Natural killer cell (primary cell): ENCODE measurements at regions of chr14 and their contacts with region 1.

Region 1: DNA sequence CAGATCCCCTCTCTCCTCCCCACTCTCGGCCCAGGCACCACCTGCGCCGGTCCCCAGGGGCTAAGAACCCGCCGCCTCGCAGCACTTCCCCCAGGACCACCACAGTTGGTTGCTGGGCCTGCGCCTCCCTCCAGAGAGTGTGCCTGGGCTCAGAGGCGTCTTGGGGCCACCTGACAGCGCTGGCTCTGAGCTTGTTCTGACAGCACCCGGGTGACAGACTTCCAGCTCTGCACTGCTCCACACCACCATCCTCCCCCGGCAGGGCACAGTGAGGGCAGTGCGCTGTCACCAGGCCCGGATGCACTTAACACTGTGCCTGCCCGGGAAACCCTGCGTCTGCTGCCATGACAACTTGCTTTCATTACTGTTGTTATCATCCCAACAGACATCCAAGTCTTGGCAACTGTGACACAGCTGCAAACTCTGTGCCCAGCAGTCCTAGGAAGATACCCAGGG is 6.6 kb downstream of the BRF1 start:
- DNase-seq: peak; percentile 73 to 82
- ATAC-seq: peak; percentile 67 to 83 (median 72)
- H3K4me3 ChIP-seq: no peak overlapping the region
- H3K4me3 Mint-ChIP-seq: peak overlapping the region; percentile 66
- H3K27ac ChIP-seq: peak overlapping the region; percentile 75
- H3K27ac Mint-ChIP-seq: peak overlapping the region; percentile 92 to 96
- H3K4me1 ChIP-seq: peaks cover 58% of the 10 kb centered on the region
- H3K4me1 Mint-ChIP-seq: peaks cover 32 to 49% of the 10 kb centered on the region in 2 donors
- H3K27me3 ChIP-seq: no peaks in the 10 kb centered on the region
- H3K27me3 Mint-ChIP-seq: no peaks in the 10 kb centered on the region
- CTCF ChIP-seq: no peak

Region 2: DNA sequence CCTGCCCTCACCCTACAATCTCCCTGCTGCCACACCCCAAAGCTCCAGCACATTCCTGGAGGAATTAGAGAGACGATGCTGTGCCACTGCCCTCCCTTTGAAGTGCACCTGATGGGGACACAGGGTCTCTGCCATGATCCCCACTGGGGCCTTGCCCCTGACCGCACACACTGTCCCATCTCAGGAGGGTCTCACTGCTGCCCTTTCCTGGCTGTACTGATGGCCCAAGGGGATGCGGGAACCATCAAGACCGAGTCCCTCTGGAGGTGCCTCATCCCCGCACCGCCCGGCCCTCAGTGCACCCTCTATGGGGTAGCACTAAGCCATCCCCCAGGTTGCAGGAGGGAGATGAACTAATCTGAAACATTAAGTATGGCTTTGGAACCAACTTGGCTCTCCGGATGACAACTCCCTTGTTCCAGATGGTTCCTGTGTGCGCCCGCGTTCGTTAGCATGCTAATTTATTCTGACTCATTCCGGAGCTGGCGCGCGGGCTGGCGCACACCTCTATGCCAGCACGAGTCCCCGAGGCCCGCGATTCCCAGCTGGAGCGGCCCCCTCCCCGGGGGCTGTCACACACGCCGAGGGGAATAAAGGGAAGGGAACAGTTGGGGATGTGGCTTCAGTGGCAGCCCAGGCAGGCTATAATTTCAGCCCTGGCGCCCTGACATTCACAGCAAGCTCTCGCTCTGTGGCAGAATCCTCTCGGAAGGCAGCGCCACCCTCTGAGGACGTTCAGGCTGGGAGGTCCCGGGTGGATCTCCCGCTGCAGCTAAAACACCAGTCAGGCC is 748.8 kb before region 1 on chr14:
- intact Hi-C with region 1: no loop called
- DNase-seq: no peak
- ATAC-seq: peak in 1 of 3 donors; percentile 6
- H3K4me3 ChIP-seq: no peak overlapping the region
- H3K4me3 Mint-ChIP-seq: no peak overlapping the region
- H3K27ac ChIP-seq: no peak overlapping the region
- H3K27ac Mint-ChIP-seq: no peak overlapping the region
- H3K4me1 ChIP-seq: no peaks in the 10 kb centered on the region
- H3K4me1 Mint-ChIP-seq: no peaks in the 10 kb centered on the region
- H3K27me3 ChIP-seq: no peaks in the 10 kb centered on the region
- H3K27me3 Mint-ChIP-seq: peaks cover 23 to 27% of the 10 kb centered on the region in 2 donors
- CTCF ChIP-seq: no peak

Region 3: DNA sequence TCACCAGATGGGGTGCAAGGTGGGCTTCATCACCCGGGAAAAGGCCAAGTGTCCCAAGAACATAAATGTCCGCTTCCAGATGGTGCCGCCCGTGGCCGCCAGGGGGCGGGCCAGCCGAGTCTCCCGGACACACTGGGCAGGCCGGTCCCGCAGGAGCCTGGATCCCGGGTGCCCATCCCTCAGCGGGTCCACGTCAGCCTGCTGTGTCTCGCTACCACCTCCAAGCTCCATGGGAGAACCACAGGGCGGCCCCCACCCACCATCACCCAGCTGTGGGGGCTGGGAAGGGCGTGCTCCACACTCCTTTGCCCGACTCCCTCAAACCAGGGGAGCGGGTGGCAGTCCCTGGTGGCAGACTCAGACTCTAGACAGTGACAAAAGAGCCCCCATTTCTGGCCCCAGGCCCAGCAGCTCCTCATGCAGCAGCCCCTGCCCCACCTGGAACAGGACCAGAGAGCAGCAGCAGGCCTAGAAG is 91.1 kb before region 1 on chr14:
- intact Hi-C with region 1: loop called (anchors 10 kb)
- DNase-seq: peak; percentile 70 to 72
- ATAC-seq: peak; percentile 54 to 69 (median 62)
- H3K4me3 ChIP-seq: no peak overlapping the region
- H3K4me3 Mint-ChIP-seq: no peak overlapping the region
- H3K27ac ChIP-seq: no peak overlapping the region
- H3K27ac Mint-ChIP-seq: no peak overlapping the region
- H3K4me1 ChIP-seq: peaks cover 37% of the 10 kb centered on the region
- H3K4me1 Mint-ChIP-seq: peaks cover 0 to 27% of the 10 kb centered on the region in 2 donors
- H3K27me3 ChIP-seq: peaks cover 9% of the 10 kb centered on the region
- H3K27me3 Mint-ChIP-seq: peaks cover 0 to 30% of the 10 kb centered on the region in 2 donors
- CTCF ChIP-seq: peak; percentile 96